ENCODE measurements at regions of chr19 and their contacts with region 1.

Region 1: GRCh38 chr19:34974646-34975045 is 10.6 kb upstream of the ZNF792 start:
- DNase-seq: no peak
- ATAC-seq: no peak
- H3K4me3 Mint-ChIP-seq: no peak overlapping the region
- H3K27ac Mint-ChIP-seq: peak overlapping the region; percentile 16
- H3K4me1 Mint-ChIP-seq: peaks cover 36% of the 10 kb centered on the region
- H3K27me3 Mint-ChIP-seq: no peaks in the 10 kb centered on the region

Region 2: GRCh38 chr19:34963573-34964409 is 10.9 kb before region 1 on chr19 and contains the start of gene ZNF792:
- CTCF ChIA-PET with region 1: interaction called, 10 read pairs
- POLR2A ChIA-PET with region 1: no interaction called
- intact Hi-C with region 1: no loop called
- DNase-seq: peak; percentile 67
- ATAC-seq: peak; percentile 79
- H3K4me3 Mint-ChIP-seq: peak within 1 kb of the TSS; percentile 76
- H3K27ac Mint-ChIP-seq: peak within 1 kb of the TSS; percentile 64
- H3K4me1 Mint-ChIP-seq: peaks cover 24% of the 10 kb centered on the region
- H3K27me3 Mint-ChIP-seq: no peaks in the 10 kb centered on the region
- total RNA-seq, gene ZNF792: 5.6 to 5.7 TPM

Region 3: GRCh38 chr19:34999498-35000341 is 25.1 kb after region 1 on chr19 and contains the start of gene GRAMD1A:
- CTCF ChIA-PET with region 1: interaction called, 26 read pairs
- POLR2A ChIA-PET with region 1: interaction called, 14 read pairs
- intact Hi-C with region 1: loop called (anchors 1 kb)
- DNase-seq: peak; percentile 87
- ATAC-seq: peak; percentile 55
- H3K4me3 Mint-ChIP-seq: peak within 1 kb of the TSS; percentile 100
- H3K27ac Mint-ChIP-seq: peak within 1 kb of the TSS; percentile 100
- H3K4me1 Mint-ChIP-seq: peaks cover 69% of the 10 kb centered on the region
- H3K27me3 Mint-ChIP-seq: no peaks in the 10 kb centered on the region
- total RNA-seq, gene GRAMD1A: 185 to 227 TPM

Region 4: GRCh38 chr19:35044317-35045117 is 69.9 kb after region 1 on chr19:
- CTCF ChIA-PET with region 1: interaction called, 6 read pairs
- POLR2A ChIA-PET with region 1: no interaction called
- intact Hi-C with region 1: loop called in 1 of 2 experiments (anchors 1 kb)
- DNase-seq: peak; percentile 79
- ATAC-seq: no peak
- H3K4me3 Mint-ChIP-seq: no peak overlapping the region
- H3K27ac Mint-ChIP-seq: no peak overlapping the region
- H3K4me1 Mint-ChIP-seq: peaks cover 25% of the 10 kb centered on the region
- H3K27me3 Mint-ChIP-seq: peaks cover 4% of the 10 kb centered on the region

Measured in activated CD4-positive, alpha-beta T cell treated with anti-CD3 and anti-CD28 coated beads for 36 hours (primary cell).